Breast epithelium (tissue), 4 donors: ENCODE measurements at regions of chr9 and their contacts with region 1.

Region 1: DNA sequence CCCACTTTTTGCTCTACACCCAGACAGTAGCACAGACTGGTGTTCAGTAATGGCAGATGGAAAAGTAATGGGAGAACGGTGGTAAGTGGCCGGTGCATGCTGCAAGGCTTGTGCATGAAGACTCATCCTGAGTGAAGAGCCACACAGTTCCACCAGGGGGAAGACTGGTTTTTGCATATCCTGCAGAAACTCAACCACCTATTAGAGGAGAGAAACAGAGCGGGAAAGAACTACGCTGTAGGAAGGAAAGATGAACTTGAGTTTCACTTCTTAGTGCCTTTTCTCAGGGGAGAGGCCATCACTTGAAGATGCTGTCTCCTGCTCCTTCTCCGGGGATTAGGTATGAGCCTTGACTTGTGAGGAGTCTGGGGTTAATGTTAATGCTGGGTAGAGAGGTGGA is 9.4 kb upstream of the PRSS3 start:
- DNase-seq: no peak
- H3K4me3 ChIP-seq: no peak overlapping the region
- H3K27ac ChIP-seq: no peak overlapping the region
- H3K4me1 ChIP-seq: no peaks in the 10 kb centered on the region
- H3K27me3 ChIP-seq: no peaks in the 10 kb centered on the region
- CTCF ChIP-seq: no peak
- POLR2A ChIP-seq: no peak

Region 2: GRCh38 chr9:33988219-33988890 is 202.4 kb after region 1 on chr9:
- intact Hi-C with region 1: loop called (anchors 10 kb)
- DNase-seq: no peak
- H3K4me3 ChIP-seq: no peak overlapping the region
- H3K27ac ChIP-seq: no peak overlapping the region
- H3K4me1 ChIP-seq: no peaks in the 10 kb centered on the region
- H3K27me3 ChIP-seq: no peaks in the 10 kb centered on the region
- CTCF ChIP-seq: no peak
- POLR2A ChIP-seq: no peak